Mucosa of descending colon (tissue), 3 donors: ENCODE measurements at regions of chr1 and their contacts with region 1.

Region 1: DNA sequence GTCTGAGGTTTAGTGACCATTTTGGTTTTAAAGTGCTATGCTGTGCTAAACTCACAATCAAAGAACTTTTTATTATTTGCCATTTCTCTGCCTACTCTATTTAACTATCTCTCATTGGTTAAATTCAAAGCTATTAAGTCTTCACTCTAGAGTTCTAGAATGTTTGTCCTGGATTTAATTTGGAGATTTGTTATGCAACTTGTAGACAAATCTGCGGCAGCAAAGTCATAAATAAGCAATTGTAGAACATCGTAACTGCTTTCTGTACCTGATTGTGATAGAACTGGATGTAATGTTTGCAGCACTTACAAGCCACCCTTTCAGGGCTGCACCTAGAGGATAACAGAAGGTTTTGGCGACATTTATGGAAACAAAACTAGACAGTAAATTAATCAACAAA is 566.5 kb upstream of the ADGRL2 start:
- DNase-seq: no peak
- ATAC-seq: no peak
- H3K4me3 ChIP-seq: no peak overlapping the region
- H3K4me1 ChIP-seq: no peaks in the 10 kb centered on the region
- CTCF ChIP-seq: no peak

Region 2: DNA sequence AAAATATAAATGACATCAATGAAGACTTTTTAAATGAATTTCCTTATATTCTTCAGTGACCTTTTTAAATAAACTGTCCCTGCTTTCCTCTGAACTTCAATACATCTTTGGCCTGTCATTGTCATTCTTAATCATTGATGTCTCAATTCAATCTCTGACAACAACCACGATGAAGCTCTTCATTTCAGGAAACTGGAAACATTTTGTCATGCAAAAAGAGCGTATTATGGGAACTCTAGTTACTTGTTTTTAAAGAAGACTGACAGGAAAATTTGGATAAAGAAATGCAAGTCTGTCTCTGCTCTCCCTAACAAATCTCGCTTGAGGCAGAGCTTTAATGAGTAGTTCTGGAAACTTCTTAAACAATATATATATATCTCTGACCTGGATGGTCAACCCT is 30.7 kb after region 1 on chr1:
- intact Hi-C with region 1: loop called in 1 of 2 experiments (anchors 2 kb)
- DNase-seq: no peak
- ATAC-seq: no peak
- H3K4me3 ChIP-seq: no peak overlapping the region
- H3K4me1 ChIP-seq: no peaks in the 10 kb centered on the region
- CTCF ChIP-seq: no peak

Region 3: DNA sequence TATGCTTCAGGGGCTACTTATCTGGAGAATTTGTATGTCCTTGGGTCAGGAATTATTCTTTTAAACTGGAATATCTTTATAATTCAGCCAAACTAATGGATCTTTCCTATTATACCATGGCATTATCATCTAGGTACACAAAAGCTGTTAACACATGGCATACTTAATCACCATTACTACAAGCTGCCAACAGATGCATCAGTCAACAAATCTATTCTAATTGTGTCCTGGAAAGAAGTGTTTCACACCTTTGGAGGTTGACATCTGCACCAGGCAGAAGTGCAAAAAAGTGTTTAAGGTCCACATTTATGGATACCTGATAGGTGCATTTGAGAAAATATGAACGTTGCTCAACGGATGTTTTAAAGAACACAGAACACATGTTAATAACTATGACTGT is 96.3 kb after region 1 on chr1:
- intact Hi-C with region 1: no loop called
- DNase-seq: no peak
- ATAC-seq: no peak
- H3K4me3 ChIP-seq: no peak overlapping the region
- H3K4me1 ChIP-seq: no peaks in the 10 kb centered on the region
- CTCF ChIP-seq: no peak